Endothelial cell of umbilical vein (primary cell): ENCODE measurements at regions of chr5 and their contacts with region 1.

Region 1: DNA sequence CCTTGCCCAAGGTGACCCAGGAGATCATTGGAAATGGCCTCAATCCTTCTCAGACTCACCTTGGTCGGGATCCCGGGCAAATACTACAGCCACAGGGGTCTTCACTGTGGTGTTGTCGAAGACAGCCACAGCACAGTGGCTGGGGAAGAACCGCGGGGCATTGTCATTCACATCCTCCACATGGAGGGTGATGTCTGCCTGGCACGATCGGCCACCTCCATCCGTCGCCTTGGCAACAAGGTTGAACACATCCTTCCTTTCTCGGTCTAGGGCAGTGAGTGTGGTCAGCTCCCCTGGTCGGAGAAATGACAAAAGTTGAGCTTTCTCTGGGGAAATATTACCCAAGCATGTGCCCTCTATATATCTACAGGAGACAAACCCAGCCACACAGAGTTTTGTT is 56.8 kb downstream of the FAT2 start:
- DNase-seq: no peak
- H3K4me3 ChIP-seq: no peak overlapping the region
- H3K27ac ChIP-seq: no peak overlapping the region
- H3K4me1 ChIP-seq: no peaks in the 10 kb centered on the region
- H3K27me3 ChIP-seq: peaks cover 2 to 3% of the 10 kb centered on the region in 2 experiments
- CTCF ChIP-seq: no peak
- POLR2A ChIP-seq: no peak

Region 2: DNA sequence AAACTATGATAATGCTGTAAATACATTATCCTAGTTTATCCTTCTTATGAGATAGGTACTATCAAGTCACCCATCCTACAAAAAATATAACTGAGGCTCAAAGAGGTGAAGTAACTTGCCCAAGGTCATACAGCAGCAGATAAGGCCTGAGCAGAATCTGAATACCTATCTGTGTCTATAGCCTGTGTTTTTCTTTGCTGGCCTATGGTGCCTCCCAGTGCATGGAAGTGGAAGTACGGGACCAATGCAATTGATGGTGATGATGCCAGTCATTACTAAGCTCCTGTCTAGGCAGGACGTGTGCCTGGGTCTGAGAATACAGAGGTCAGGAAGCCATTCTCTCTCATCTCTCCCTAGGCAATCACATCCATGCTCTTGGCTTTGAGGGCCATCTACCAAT is 11.0 kb before region 1 on chr5:
- CTCF ChIA-PET with region 1: interaction called, 14 read pairs
- POLR2A ChIA-PET with region 1: no interaction called
- dilution Hi-C with region 1: no loop called
- intact Hi-C with region 1: no loop called
- DNase-seq: peak; percentile 52
- H3K4me3 ChIP-seq: no peak overlapping the region
- H3K27ac ChIP-seq: no peak overlapping the region
- H3K4me1 ChIP-seq: no peaks in the 10 kb centered on the region
- H3K27me3 ChIP-seq: peaks cover 0 to 2% of the 10 kb centered on the region in 2 experiments
- CTCF ChIP-seq: peak; percentile 53 to 57
- POLR2A ChIP-seq: no peak

Region 3: DNA sequence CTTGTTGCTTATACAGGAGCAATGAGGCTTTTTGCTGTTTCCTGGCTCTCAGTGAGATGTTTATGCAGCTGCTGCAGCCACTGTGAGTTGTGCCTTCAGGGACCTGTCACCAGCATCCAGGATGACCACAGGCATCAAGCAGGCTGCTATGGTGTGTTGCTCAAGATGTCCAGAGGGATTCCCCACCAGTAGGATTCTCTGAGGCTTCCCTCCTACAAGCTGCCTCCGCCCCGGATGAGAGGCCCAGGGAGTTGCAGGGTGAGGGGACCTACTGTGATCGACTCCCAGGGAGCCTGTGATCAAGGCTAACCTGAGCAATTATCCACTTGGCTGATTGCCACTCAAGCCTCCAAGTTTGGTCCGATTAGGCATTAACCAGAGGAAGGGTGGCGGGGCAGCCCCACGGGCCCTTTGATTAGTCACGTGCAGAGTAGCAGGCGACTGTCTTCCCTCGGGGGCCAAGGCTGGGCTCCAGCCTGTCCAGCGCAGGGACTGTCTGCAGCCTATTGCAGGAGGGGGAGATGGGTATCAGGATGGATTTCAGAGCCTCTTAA is 58.6 kb after region 1 on chr5:
- CTCF ChIA-PET with region 1: no interaction called
- POLR2A ChIA-PET with region 1: no interaction called
- dilution Hi-C with region 1: no loop called
- intact Hi-C with region 1: no loop called
- DNase-seq: no peak
- H3K4me3 ChIP-seq: no peak overlapping the region
- H3K27ac ChIP-seq: no peak overlapping the region
- H3K4me1 ChIP-seq: no peaks in the 10 kb centered on the region
- H3K27me3 ChIP-seq: no peaks in the 10 kb centered on the region
- CTCF ChIP-seq: no peak
- POLR2A ChIP-seq: no peak